Stomach (tissue), 19 donors: ENCODE measurements at regions of chr14 and their contacts with region 1.

Region 1: DNA sequence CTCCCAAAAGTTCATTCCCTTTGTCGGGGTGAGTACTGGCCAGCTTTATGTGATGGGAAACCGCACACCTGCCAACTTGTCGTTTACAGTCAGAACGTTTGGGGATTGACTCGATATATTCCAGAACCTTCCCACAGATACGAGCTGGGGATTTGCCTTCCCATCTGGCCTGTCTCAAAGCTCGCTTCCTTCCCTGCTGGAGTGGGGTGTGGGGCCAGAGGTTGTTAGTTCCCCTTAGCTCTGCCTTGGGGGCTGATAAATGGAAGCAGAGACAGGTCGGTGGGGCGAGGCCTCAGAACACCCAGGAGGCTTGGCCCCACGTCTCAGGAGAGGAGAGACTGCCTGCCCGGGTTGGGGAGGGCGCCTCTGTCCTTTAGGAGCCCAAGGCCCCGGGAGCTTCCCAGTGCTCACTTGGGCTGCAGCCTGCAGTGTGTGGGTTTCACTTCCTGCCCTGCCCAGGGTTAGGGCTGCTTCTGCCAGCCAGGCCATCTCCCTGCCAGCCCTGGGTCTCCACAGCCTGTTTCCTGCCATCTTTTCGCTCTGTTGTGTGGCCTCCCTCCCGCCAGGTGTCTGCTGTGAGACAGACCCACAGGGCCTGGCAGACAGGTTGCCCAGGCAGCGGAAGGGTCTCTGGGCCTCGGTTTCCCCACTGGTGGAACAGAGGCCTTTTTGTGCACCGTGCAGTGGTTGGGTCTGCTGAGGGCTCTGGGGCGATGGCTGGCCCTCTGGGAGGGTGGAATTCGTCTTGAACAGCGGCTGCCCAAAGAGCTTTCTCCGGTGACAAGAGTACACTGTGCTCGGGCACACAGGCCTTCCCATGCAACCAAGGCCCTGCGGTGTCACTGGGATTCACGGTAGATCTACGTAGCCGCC is 8.1 kb upstream of the TEX22 start:
- DNase-seq: no peak
- H3K4me3 ChIP-seq: no peak overlapping the region
- H3K27ac ChIP-seq: peak overlapping the region in 4 of 5 donors; percentile 33 to 67 (median 50)
- H3K4me1 ChIP-seq: peaks cover 0 to 19% (median 14%) of the 10 kb centered on the region in 4 donors
- H3K27me3 ChIP-seq: no peaks in the 10 kb centered on the region
- CTCF ChIP-seq: no peak
- EP300 ChIP-seq: no peak
- POLR2A ChIP-seq: no peak

Region 2: GRCh38 chr14:104891660-104892543 is 498.3 kb before region 1 on chr14:
- intact Hi-C with region 1: no loop called
- DNase-seq: peak in 1 of 2 donors; percentile 11
- H3K4me3 ChIP-seq: no peak overlapping the region
- H3K27ac ChIP-seq: no peak overlapping the region
- H3K4me1 ChIP-seq: peaks cover 22 to 31% (median 28%) of the 10 kb centered on the region in 4 donors
- H3K27me3 ChIP-seq: no peaks in the 10 kb centered on the region
- CTCF ChIP-seq: no peak
- EP300 ChIP-seq: no peak
- POLR2A ChIP-seq: no peak

Region 3: DNA sequence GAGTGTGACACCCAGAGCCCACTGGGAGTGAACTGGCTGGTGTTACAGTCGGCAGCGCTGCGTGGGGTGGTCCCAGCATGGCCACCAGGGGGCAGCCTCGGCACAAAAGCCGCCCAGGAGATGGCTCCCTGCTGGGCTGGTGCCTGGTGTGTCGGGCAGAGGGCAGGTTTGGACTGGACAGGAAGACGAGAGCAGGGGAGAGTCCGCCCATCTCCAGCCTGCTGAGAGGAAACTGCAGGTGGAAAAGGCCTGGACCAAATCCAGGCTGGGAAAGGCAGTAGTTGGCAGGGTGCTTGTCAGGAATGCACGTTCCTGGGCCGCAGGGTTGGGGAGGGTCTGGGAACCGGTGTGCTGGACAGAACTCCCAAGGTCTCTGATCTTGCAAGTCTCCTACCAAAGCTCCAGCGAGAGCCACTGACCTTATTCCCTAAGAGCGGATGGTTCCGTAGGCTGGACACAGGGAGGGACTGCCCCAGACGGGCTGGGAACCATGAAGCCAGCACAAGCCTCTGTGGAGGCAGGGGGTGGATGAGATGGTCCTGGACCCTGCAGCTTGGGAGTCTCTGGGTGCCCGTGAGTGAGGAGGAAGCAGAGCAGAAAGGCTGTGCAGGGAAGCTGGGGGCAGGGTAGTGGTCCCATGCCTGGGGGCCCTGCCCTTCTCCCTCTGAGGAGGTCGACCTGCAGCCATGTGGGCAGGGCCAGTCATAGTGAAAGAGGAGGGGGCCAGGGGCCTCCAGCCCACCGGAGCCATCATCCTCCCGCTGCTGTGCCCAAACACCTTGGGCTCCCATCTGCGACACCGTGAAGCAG is 413.8 kb before region 1 on chr14:
- intact Hi-C with region 1: no loop called
- DNase-seq: peak; percentile 91 to 93
- H3K4me3 ChIP-seq: peak overlapping the region in 1 of 4 donors; percentile 52
- H3K27ac ChIP-seq: peak overlapping the region in 2 of 5 donors; percentile 90 to 94
- H3K4me1 ChIP-seq: peaks cover 68 to 93% (median 83%) of the 10 kb centered on the region in 4 donors
- H3K27me3 ChIP-seq: peaks cover 0 to 31% (median 21%) of the 10 kb centered on the region in 3 donors
- CTCF ChIP-seq: peak in 5 of 7 experiments; percentile 87 to 95 (median 92)
- EP300 ChIP-seq: no peak
- POLR2A ChIP-seq: no peak

Region 4: DNA sequence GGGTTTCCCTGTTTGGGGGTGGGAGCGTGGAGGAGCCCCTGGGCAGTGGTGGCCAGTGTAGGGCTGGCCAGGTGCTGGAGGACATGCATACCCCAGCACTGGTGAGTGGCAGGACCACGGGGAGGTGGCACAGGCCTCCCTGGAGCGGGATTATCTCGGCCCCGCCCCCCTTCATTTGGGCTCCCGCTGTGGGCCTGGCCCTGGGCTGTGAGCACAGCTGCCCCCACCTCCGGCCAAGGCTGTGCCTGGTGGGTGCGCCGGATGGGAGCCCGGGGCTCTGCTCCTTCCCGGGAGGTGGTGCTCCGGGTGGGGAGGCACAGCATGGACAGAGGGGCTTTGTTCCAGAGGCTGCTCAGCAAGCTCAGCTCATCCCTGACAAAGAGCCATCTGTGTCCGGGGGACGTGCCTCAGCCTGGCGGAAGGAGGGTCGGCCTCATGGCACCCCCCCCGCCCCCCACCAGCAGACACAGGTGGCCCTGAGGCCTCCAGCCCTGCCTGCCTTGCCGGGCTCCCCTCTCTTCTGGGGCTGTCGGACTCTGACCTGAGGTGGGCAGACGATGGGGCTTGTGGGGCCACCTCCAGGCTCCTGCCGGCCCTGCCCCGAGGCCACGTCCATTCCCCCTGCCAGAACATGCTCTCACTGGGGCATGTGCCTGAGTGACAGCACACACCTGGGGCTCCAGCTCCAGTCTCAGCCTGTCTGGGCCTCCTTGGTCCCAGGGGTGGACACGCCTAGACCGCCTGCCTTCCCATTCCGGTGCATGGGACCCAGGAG is 109.2 kb after region 1 on chr14:
- intact Hi-C with region 1: loop called (anchors 10 kb)
- DNase-seq: peak in 1 of 2 donors; percentile 73
- H3K4me3 ChIP-seq: no peak overlapping the region
- H3K27ac ChIP-seq: no peak overlapping the region
- H3K4me1 ChIP-seq: peaks cover 0 to 6% (median 2%) of the 10 kb centered on the region in 4 donors
- H3K27me3 ChIP-seq: no peaks in the 10 kb centered on the region
- CTCF ChIP-seq: no peak
- EP300 ChIP-seq: no peak
- POLR2A ChIP-seq: no peak